Endothelial cell of umbilical vein (primary cell): ENCODE measurements at regions of chr3 and their contacts with region 1.

Region 1: GRCh38 chr3:30681643-30682211 is 75.3 kb downstream of the TGFBR2 start:
- DNase-seq: peak; percentile 99
- H3K4me3 ChIP-seq: no peak overlapping the region
- H3K27ac ChIP-seq: peak overlapping the region; percentile 98
- H3K4me1 ChIP-seq: peaks cover 92% of the 10 kb centered on the region
- H3K27me3 ChIP-seq: no peaks in the 10 kb centered on the region
- CTCF ChIP-seq: no peak
- POLR2A ChIP-seq: peak; percentile 87

Region 2: GRCh38 chr3:30342319-30343060 is 339.2 kb before region 1 on chr3:
- CTCF ChIA-PET with region 1: interaction called, 3 read pairs
- POLR2A ChIA-PET with region 1: interaction called, 6 read pairs
- dilution Hi-C with region 1: no loop called
- intact Hi-C with region 1: loop called (anchors 1 kb)
- DNase-seq: peak; percentile 94
- H3K4me3 ChIP-seq: peak overlapping the region in 1 of 3 experiments; percentile 32
- H3K27ac ChIP-seq: peak overlapping the region; percentile 98
- H3K4me1 ChIP-seq: peaks cover 62% of the 10 kb centered on the region
- H3K27me3 ChIP-seq: no peaks in the 10 kb centered on the region
- CTCF ChIP-seq: no peak
- POLR2A ChIP-seq: no peak

Region 3: DNA sequence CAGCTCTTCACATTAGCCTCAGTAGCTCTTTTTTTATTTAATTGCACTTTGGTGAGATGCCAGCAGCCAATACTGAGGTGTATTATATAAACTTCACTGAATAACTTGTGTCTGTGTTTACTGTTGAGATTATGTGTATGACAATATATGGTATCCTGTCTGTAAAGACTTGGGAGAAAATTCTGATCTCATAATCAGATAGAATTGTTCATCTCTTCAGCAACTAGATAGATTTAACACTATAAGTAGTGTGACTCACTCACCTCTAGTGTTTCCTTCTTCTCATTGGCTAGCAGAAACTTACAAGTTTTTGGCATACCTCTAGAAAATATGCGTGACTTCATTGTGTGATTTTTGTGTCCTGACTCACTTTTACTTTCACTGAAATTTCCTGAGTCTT is 142.9 kb before region 1 on chr3:
- CTCF ChIA-PET with region 1: interaction called, 3 read pairs
- POLR2A ChIA-PET with region 1: no interaction called
- dilution Hi-C with region 1: no loop called
- intact Hi-C with region 1: loop called (anchors 1 kb)
- DNase-seq: peak; percentile 93
- H3K4me3 ChIP-seq: no peak overlapping the region
- H3K27ac ChIP-seq: peak overlapping the region; percentile 97
- H3K4me1 ChIP-seq: peaks cover 26% of the 10 kb centered on the region
- H3K27me3 ChIP-seq: no peaks in the 10 kb centered on the region
- CTCF ChIP-seq: no peak
- POLR2A ChIP-seq: no peak

Region 4: GRCh38 chr3:30623351-30623750 is 58.4 kb before region 1 on chr3:
- CTCF ChIA-PET with region 1: no interaction called
- POLR2A ChIA-PET with region 1: no interaction called
- dilution Hi-C with region 1: no loop called
- intact Hi-C with region 1: loop called (anchors 2 kb)
- DNase-seq: no peak
- H3K4me3 ChIP-seq: no peak overlapping the region
- H3K27ac ChIP-seq: no peak overlapping the region
- H3K4me1 ChIP-seq: peaks cover 83% of the 10 kb centered on the region
- H3K27me3 ChIP-seq: no peaks in the 10 kb centered on the region
- CTCF ChIP-seq: no peak
- POLR2A ChIP-seq: no peak

Region 5: GRCh38 chr3:30667280-30667651 is 14.5 kb before region 1 on chr3:
- CTCF ChIA-PET with region 1: interaction called, 11 read pairs
- POLR2A ChIA-PET with region 1: interaction called, 7 read pairs
- dilution Hi-C with region 1: no loop called
- intact Hi-C with region 1: loop called (anchors 1 kb)
- DNase-seq: peak; percentile 63
- H3K4me3 ChIP-seq: no peak overlapping the region
- H3K27ac ChIP-seq: peak overlapping the region; percentile 52
- H3K4me1 ChIP-seq: peaks cover 56% of the 10 kb centered on the region
- H3K27me3 ChIP-seq: no peaks in the 10 kb centered on the region
- CTCF ChIP-seq: no peak
- POLR2A ChIP-seq: no peak